Motor neuron (in vitro differentiated cells): ENCODE measurements at regions of chr7 and their contacts with region 1.

Region 1: GRCh38 chr7:30800785-30801252 is 29.6 kb downstream of the MINDY4 start:
- ATAC-seq: peak; percentile 38 to 90 (median 86)
- H3K4me3 ChIP-seq: no peak overlapping the region
- H3K27ac ChIP-seq: no peak overlapping the region
- H3K4me1 ChIP-seq: peaks cover 0 to 2% of the 10 kb centered on the region in 2 donors

Region 2: DNA sequence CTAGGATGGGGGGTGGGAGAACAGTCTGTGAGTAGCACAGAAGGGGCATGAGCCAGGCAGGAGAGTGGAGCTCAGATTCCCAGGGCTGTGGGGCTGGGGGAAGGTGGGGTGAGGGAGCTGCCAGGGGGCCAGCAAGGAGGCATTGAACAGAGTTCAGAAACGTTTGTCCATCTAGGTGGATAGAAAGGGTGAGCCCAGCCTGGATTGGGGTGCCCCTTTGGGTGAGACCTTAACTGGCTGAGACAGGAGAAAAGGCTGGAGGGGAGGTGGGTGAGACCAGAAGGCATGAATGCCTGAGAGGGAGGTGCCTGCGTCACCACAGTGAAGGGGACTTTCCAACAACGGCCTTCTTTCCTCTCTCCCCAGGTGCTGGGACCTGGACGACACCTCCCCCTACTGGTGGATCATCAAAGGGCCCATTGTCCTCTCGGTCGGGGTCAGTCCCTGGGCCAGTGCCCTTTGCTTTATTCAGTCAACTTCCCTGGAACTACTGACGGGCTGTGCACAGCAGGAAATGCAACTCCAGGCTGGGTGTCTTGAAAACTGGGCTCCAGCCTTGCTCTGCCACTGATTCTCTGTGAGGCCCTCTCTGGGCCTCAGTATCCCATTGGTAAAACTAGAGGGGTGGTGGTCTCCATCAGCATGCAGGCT is 173.9 kb after region 1 on chr7:
- in situ Hi-C with region 1: loop called in 4 of 9 experiments (anchors 10 to 25 kb)
- ATAC-seq: peak; percentile 52 to 96 (median 68)
- H3K4me3 ChIP-seq: no peak overlapping the region
- H3K27ac ChIP-seq: no peak overlapping the region
- H3K4me1 ChIP-seq: peaks cover 0 to 12% of the 10 kb centered on the region in 2 donors

Region 3: DNA sequence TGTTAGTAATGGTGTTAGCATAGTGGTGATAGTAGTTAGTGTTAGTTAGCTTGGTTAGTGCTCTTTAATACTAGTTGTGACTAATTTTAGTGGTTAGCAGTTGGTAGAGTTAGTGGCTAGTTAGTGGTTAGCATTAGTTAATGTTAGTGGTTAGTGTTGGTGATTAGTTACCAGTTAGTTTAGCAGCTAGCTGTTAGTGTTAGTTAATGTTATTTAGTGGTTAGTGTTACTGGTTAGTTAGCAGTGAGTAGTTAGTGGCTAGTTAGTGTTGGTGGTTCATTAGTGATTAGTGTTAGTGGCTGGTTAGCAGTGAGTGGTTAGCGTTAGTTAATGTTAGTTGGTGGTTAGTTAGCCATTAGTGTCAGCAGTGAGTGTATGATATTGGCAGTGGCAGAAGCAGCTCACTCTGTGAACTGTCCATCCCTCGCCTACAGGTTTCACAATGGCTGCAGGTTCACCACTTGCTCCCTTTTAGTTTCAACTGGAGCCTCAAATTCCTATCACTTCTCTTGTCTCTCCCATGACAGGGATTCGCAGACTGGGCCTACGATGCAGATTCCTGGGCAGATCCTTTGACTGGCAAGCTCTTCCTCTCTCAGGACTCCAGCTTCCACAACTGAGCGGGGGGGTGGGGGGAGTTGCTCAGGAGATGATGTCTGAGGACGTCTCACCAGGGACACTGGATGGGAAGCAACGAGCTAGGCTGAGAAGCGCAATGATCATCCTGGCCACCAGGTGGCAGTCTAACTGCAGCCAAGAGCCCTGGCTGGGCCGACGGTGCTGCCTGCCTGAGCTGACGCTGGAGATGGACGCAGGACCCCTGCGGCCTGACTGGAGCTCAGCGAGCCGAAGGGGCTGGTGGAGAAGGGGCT is 182.5 kb after region 1 on chr7:
- in situ Hi-C with region 1: loop called in 2 of 9 experiments (anchors 10 to 25 kb)
- ATAC-seq: peak; percentile 59 to 97 (median 80)
- H3K4me3 ChIP-seq: peak overlapping the region in 2 of 5 donors; percentile 14 to 15
- H3K27ac ChIP-seq: no peak overlapping the region
- H3K4me1 ChIP-seq: peaks cover 25 to 35% of the 10 kb centered on the region in 2 donors

Region 4: DNA sequence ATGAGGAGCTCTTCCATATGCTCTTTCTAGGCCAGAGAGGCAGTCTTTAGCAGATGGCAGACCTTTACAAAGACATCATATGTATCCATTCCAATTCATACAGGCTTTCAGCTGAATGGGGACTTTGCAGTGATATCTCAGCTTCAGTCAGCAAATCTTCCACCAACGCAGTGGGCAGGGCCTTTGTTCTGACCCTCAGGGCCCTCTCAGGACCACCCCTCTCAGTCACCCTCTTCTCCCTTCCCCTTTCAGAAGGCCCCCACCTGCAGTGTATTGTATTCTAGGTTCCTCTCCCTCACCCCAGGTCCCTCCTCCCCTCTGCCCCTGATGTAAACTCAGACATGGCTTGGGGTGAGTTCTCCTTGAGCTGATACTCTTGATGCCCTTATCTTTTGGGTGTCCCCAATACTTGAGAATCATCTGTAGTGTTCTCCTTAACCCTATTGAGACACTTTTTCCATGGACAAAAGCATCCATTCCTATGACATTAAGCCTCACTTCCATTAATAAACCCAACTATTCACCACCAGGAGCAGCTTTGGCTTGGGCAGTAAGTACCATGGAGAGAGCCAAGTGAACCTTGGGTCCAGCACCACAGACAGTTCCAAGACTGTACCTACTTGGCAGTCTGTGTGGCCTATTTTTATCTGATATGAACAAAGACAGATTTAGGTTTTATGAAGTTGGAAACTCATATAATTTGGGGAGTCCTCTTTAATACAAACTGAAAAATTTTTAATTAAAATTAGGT is 313.9 kb after region 1 on chr7:
- in situ Hi-C with region 1: loop called in 4 of 9 experiments (anchors 10 to 25 kb)
- ATAC-seq: peak in 4 of 8 experiments; percentile 51 to 74 (median 60)
- H3K4me3 ChIP-seq: no peak overlapping the region
- H3K27ac ChIP-seq: no peak overlapping the region
- H3K4me1 ChIP-seq: no peaks in the 10 kb centered on the region

Region 5: DNA sequence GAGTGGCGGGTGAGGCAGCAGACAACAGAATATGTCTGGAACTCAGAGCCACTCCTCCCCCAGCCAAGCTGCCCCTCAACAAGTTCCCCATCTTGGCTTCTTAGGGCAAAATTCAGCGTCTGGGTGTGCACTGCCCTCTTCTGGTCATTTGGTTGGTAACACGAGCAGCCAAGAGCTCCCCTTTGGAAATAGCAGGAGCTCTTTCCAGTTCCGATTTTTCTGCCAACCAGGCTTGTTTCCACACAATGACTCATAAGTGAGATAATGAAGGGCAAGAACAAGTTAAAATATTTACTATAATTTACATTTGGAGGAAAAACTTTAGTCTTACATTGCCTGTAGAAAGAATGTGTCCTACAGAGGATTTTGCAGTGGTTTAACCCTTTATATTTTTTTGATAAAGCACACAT is 321.8 kb after region 1 on chr7:
- in situ Hi-C with region 1: loop called in 7 of 9 experiments (anchors 10 to 25 kb)
- ATAC-seq: peak; percentile 69 to 92 (median 80)
- H3K4me3 ChIP-seq: no peak overlapping the region
- H3K27ac ChIP-seq: no peak overlapping the region
- H3K4me1 ChIP-seq: no peaks in the 10 kb centered on the region